ENCODE measurements at regions of chr1 and their contacts with region 1.

Region 1: GRCh38 chr1:223670458-223671168 is 5.1 kb upstream of the CAPN8 start:
- DNase-seq: peak; percentile 57
- H3K4me3 ChIP-seq: no peak overlapping the region
- H3K27ac ChIP-seq: no peak overlapping the region
- H3K4me1 ChIP-seq: peaks cover 29% of the 10 kb centered on the region
- H3K27me3 ChIP-seq: no peaks in the 10 kb centered on the region
- CTCF ChIP-seq: peak; percentile 85 to 86

Region 2: GRCh38 chr1:222829868-222830267 is 840.7 kb before region 1 on chr1:
- CTCF ChIA-PET with region 1: no interaction called
- dilution Hi-C with region 1: no loop called
- in situ Hi-C with region 1: no loop called
- intact Hi-C with region 1: no loop called
- DNase-seq: peak; percentile 32
- H3K4me3 ChIP-seq: no peak overlapping the region
- H3K27ac ChIP-seq: no peak overlapping the region
- H3K4me1 ChIP-seq: no peaks in the 10 kb centered on the region
- H3K27me3 ChIP-seq: no peaks in the 10 kb centered on the region
- CTCF ChIP-seq: no peak

Region 3: GRCh38 chr1:223631473-223631872 is 39.1 kb before region 1 on chr1:
- CTCF ChIA-PET with region 1: interaction called, 3 read pairs
- dilution Hi-C with region 1: loop called (anchors 5 kb)
- in situ Hi-C with region 1: no loop called
- intact Hi-C with region 1: loop called (anchors 5 kb)
- DNase-seq: no peak
- H3K4me3 ChIP-seq: no peak overlapping the region
- H3K27ac ChIP-seq: no peak overlapping the region
- H3K4me1 ChIP-seq: no peaks in the 10 kb centered on the region
- H3K27me3 ChIP-seq: no peaks in the 10 kb centered on the region
- CTCF ChIP-seq: no peak

Region 4: GRCh38 chr1:223652436-223652941 is 18.1 kb before region 1 on chr1:
- CTCF ChIA-PET with region 1: no interaction called
- dilution Hi-C with region 1: no loop called
- in situ Hi-C with region 1: no loop called
- intact Hi-C with region 1: loop called (anchors 1 kb)
- DNase-seq: peak; percentile 91
- H3K4me3 ChIP-seq: no peak overlapping the region
- H3K27ac ChIP-seq: peak overlapping the region; percentile 31
- H3K4me1 ChIP-seq: peaks cover 46% of the 10 kb centered on the region
- H3K27me3 ChIP-seq: no peaks in the 10 kb centered on the region
- CTCF ChIP-seq: no peak

Region 5: DNA sequence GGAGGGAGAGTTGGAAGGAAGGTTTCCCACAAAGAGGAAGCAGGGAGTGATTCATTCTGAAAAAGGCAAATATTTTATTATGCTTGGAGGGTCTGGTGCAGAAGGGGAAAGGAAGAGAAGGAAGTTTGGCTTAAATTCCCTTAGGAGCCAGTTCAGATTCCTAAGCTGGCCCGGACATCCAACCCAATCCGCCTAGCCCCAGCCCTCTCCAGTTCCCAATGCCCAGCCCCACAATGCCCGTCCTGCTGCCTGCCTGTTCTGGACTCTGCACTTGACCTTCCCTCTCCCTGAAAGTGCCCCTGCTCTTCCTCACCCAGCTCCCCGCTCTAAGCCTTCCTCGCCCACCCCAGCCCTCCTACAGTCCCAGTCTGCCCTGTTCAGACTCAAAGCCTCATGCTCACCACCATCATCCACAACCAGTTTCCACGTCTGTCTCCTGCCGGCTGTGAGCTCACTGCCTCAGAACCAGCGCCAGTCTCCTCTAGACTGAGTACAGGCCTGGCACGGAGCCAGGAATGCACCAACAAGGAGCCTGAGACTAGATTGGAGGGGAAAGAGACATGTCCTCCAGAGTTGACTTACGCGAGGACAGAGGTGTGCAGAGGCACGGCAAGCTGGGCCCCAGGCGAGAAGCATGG is 60.6 kb after region 1 on chr1:
- CTCF ChIA-PET with region 1: no interaction called
- dilution Hi-C with region 1: loop called (anchors 5 kb)
- in situ Hi-C with region 1: no loop called
- intact Hi-C with region 1: no loop called
- DNase-seq: no peak
- H3K4me3 ChIP-seq: no peak overlapping the region
- H3K27ac ChIP-seq: no peak overlapping the region
- H3K4me1 ChIP-seq: peaks cover 28% of the 10 kb centered on the region
- H3K27me3 ChIP-seq: no peaks in the 10 kb centered on the region
- CTCF ChIP-seq: no peak